Heart left ventricle (tissue), 16 donors: ENCODE measurements at regions of chr4 and their contacts with region 1.

Region 1: GRCh38 chr4:37389967-37390580 is 145.5 kb downstream of the NWD2 start:
- DNase-seq: no peak
- ATAC-seq: no peak
- H3K4me3 ChIP-seq: no peak overlapping the region
- H3K27ac ChIP-seq: no peak overlapping the region
- H3K4me1 ChIP-seq: peaks cover 0 to 28% (median 3%) of the 10 kb centered on the region in 12 donors
- H3K27me3 ChIP-seq: peaks cover 0 to 7% (median 0%) of the 10 kb centered on the region in 9 donors
- CTCF ChIP-seq: peak; percentile 66 to 82 (median 74)
- POLR2A ChIP-seq: no peak

Region 2: GRCh38 chr4:36414248-36414647 is 975.8 kb before region 1 on chr4:
- intact Hi-C with region 1: loop called in 1 of 10 experiments (anchors 10 kb)
- DNase-seq: no peak
- ATAC-seq: no peak
- H3K4me3 ChIP-seq: no peak overlapping the region
- H3K27ac ChIP-seq: no peak overlapping the region
- H3K4me1 ChIP-seq: no peaks in the 10 kb centered on the region
- H3K27me3 ChIP-seq: peaks cover 0 to 10% (median 0%) of the 10 kb centered on the region in 9 donors
- CTCF ChIP-seq: peak in 5 of 12 donors; percentile 8 to 33 (median 30)
- POLR2A ChIP-seq: no peak